ENCODE measurements at regions of chr17 and their contacts with region 1.

Region 1: GRCh38 chr17:68613739-68614298 is 12.7 kb upstream of the FAM20A start:
- DNase-seq: peak; percentile 34 to 76 (median 44)
- ATAC-seq: peak; percentile 93
- H3K4me3 ChIP-seq: no peak overlapping the region
- H3K27ac ChIP-seq: no peak overlapping the region
- H3K4me1 ChIP-seq: no peaks in the 10 kb centered on the region
- H3K27me3 ChIP-seq: no peaks in the 10 kb centered on the region
- CTCF ChIP-seq: peak; percentile 76 to 86 (median 84)
- EP300 ChIP-seq: no peak
- POLR2A ChIP-seq: no peak
- RAD21 ChIP-seq: peak; percentile 64 to 77

Region 2: GRCh38 chr17:68468334-68468733 is 145.5 kb before region 1 on chr17:
- CTCF ChIA-PET with region 1: interaction called, 3 read pairs
- POLR2A ChIA-PET with region 1: no interaction called
- in situ Hi-C with region 1: no loop called
- intact Hi-C with region 1: loop called (anchors 5 kb)
- DNase-seq: no peak
- ATAC-seq: no peak
- H3K4me3 ChIP-seq: no peak overlapping the region
- H3K27ac ChIP-seq: no peak overlapping the region
- H3K4me1 ChIP-seq: no peaks in the 10 kb centered on the region
- H3K27me3 ChIP-seq: peaks cover 0 to 12% of the 10 kb centered on the region in 2 experiments; a peak in 1 of 5 replicates
- CTCF ChIP-seq: no peak
- EP300 ChIP-seq: no peak
- POLR2A ChIP-seq: no peak
- RAD21 ChIP-seq: no peak

Region 3: DNA sequence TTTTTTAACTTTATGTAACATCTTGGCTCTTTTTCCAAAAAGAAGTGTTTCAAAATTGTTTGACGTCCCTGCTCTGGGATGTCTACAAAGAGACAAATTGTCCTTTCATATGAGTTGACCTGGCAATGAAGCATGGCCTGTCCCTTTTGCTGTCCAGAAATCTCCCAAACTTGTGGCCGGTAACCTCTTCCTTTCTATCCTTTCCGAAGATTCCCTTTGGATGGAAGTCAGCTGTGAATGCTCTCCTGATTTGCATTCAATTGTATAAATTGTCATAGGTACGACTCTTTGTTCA is 28.2 kb after region 1 on chr17:
- CTCF ChIA-PET with region 1: no interaction called
- POLR2A ChIA-PET with region 1: no interaction called
- in situ Hi-C with region 1: no loop called
- intact Hi-C with region 1: no loop called
- DNase-seq: no peak
- ATAC-seq: no peak
- H3K4me3 ChIP-seq: no peak overlapping the region
- H3K27ac ChIP-seq: no peak overlapping the region
- H3K4me1 ChIP-seq: no peaks in the 10 kb centered on the region
- H3K27me3 ChIP-seq: peaks cover 0 to 7% of the 10 kb centered on the region in 2 experiments; a peak in 2 of 5 replicates
- CTCF ChIP-seq: no peak
- EP300 ChIP-seq: no peak
- POLR2A ChIP-seq: no peak
- RAD21 ChIP-seq: no peak

Region 4: DNA sequence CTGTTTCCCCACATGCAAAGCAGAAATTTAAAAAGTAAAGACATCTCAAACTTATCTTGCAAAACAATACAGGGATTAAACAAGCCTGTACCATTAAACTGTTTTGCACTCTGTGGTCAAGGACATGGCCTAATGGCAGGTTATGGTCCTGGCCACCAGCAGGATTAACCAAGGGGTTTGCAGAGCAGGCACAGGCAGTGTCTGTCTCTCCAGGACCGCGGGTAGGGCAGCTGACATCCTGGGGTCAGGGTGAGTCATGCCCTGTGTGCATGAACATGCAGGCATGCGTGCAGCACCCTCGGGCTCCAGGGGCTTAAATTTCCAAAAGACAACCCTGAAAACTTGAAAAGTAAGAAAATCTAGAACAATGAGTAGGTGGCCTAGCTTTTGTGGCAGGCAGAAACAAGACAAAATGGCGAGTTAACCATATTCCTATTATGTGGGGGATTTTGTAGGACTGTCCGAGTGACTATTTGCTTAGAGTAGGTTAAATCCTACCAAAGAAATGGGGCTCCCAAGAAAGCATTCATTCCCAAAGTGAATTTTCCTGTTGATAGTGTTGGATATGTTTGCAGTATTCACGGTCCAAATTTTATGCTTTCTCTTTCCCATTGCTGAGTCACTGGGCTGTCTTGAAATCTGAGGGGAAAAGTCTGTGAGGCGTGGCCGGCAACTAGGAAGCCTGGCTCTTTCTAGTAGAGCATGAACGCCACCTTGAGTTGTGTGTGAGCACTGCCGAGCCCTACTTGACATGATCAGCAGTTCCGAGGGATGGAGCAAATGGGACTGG is 145.7 kb after region 1 on chr17:
- CTCF ChIA-PET with region 1: no interaction called
- POLR2A ChIA-PET with region 1: no interaction called
- in situ Hi-C with region 1: no loop called
- intact Hi-C with region 1: loop called (anchors 1 kb)
- DNase-seq: peak; percentile 84 to 93 (median 86)
- ATAC-seq: peak; percentile 99
- H3K4me3 ChIP-seq: peak overlapping the region; percentile 23
- H3K27ac ChIP-seq: peak overlapping the region; percentile 63
- H3K4me1 ChIP-seq: peaks cover 3 to 6% of the 10 kb centered on the region in 2 experiments; a peak in 2 of 5 replicates
- H3K27me3 ChIP-seq: no peaks in the 10 kb centered on the region; a peak in 1 of 5 replicates
- CTCF ChIP-seq: peak; percentile 84 to 96 (median 95)
- EP300 ChIP-seq: peak; percentile 3; the same call in 1 of the 2 replicates
- POLR2A ChIP-seq: no peak
- RAD21 ChIP-seq: peak; percentile 90 to 94